Esophagus muscularis mucosa (tissue), 4 donors: ENCODE measurements at regions of chr3 and their contacts with region 1.

Region 1: DNA sequence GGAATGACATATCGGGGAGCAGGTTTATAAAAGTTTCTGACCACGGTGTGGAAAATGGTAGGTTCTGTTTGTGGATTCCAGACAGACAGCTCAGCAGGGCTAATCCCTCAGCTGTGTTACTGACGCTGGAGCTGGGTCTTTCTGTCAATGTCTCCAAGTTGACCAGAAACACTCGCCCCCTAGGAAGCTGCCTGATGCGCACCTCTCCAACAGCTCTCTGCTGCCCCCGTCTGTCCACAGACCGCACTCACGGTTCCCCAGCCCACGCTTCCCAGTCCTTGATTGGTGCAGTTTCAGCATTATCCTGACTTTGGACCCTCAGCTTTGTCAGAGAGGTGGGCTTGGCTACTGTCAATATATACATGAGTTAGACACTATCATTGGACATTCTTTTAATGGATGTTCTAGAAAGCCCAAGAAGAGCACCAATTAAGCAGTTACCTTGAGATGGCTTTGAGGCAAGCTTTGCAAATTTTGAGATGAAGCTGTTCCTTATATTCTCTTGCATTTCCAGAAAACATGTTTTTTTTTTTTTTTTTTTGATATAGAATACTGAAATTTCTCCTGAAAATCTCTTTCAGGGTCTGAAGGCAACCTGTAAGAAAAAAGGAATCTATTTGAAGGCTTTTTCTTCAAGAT is 98.9 kb upstream of the TBC1D5 start:
- DNase-seq: no peak
- H3K4me3 ChIP-seq: no peak overlapping the region
- H3K27ac ChIP-seq: no peak overlapping the region
- H3K4me1 ChIP-seq: no peaks in the 10 kb centered on the region
- H3K27me3 ChIP-seq: no peaks in the 10 kb centered on the region
- CTCF ChIP-seq: peak; percentile 83 to 97 (median 85)
- EP300 ChIP-seq: no peak
- POLR2A ChIP-seq: no peak

Region 2: GRCh38 chr3:17258823-17259436 is 582.4 kb before region 1 on chr3:
- intact Hi-C with region 1: loop called (anchors 5 kb)
- DNase-seq: no peak
- H3K4me3 ChIP-seq: no peak overlapping the region
- H3K27ac ChIP-seq: no peak overlapping the region
- H3K4me1 ChIP-seq: no peaks in the 10 kb centered on the region
- H3K27me3 ChIP-seq: no peaks in the 10 kb centered on the region
- CTCF ChIP-seq: peak; percentile 66 to 76 (median 67)
- EP300 ChIP-seq: no peak
- POLR2A ChIP-seq: no peak

Region 3: DNA sequence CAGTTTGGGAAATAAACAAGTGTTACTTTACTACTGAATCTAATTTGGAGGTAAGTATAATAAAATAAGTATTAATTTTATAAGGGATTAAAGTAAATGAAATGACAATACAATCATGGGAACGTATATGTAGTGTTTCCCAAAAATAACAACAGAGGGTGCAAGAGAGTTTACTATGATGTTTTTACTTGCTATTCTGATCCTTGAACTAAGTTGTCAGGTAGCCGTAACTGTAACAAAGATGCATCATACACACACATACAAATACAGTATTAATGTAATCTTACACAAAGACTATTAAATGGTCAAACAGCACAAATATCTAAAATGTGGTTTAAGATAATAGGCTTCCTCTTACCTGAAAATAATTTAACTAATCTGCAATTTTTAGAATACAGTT is 410.3 kb before region 1 on chr3:
- intact Hi-C with region 1: loop called (anchors 2 kb)
- DNase-seq: no peak
- H3K4me3 ChIP-seq: no peak overlapping the region
- H3K27ac ChIP-seq: no peak overlapping the region
- H3K4me1 ChIP-seq: peaks cover 0 to 18% (median 8%) of the 10 kb centered on the region in 4 donors
- H3K27me3 ChIP-seq: no peaks in the 10 kb centered on the region
- CTCF ChIP-seq: peak in 2 of 3 experiments; percentile 32 to 47
- EP300 ChIP-seq: no peak
- POLR2A ChIP-seq: no peak

Region 4: GRCh38 chr3:17645072-17645698 is 196.1 kb before region 1 on chr3:
- intact Hi-C with region 1: loop called (anchors 5 kb)
- DNase-seq: no peak
- H3K4me3 ChIP-seq: no peak overlapping the region
- H3K27ac ChIP-seq: no peak overlapping the region
- H3K4me1 ChIP-seq: peaks cover 3 to 13% (median 9%) of the 10 kb centered on the region in 4 donors
- H3K27me3 ChIP-seq: no peaks in the 10 kb centered on the region
- CTCF ChIP-seq: peak; percentile 41 to 75 (median 69)
- EP300 ChIP-seq: no peak
- POLR2A ChIP-seq: no peak